Activated naive CD4-positive, alpha-beta T cell treated with anti-CD3 and anti-CD28 coated beads for 36 hours (primary cell): ENCODE measurements at regions of chr11 and their contacts with region 1.

Region 1: GRCh38 chr11:59158206-59159068 is 13.5 kb upstream of the DTX4 start:
- DNase-seq: peak; percentile 80
- H3K4me3 Mint-ChIP-seq: no peak overlapping the region
- H3K27ac Mint-ChIP-seq: no peak overlapping the region
- H3K4me1 Mint-ChIP-seq: peaks cover 8% of the 10 kb centered on the region
- H3K27me3 Mint-ChIP-seq: peaks cover 11% of the 10 kb centered on the region

Region 2: GRCh38 chr11:58654079-58654907 is 504.1 kb before region 1 on chr11:
- CTCF ChIA-PET with region 1: interaction called, 3 read pairs
- intact Hi-C with region 1: loop called (anchors 5 kb)
- DNase-seq: peak; percentile 89
- H3K4me3 Mint-ChIP-seq: no peak overlapping the region
- H3K27ac Mint-ChIP-seq: no peak overlapping the region
- H3K4me1 Mint-ChIP-seq: peaks cover 18% of the 10 kb centered on the region
- H3K27me3 Mint-ChIP-seq: no peaks in the 10 kb centered on the region

Region 3: GRCh38 chr11:58958500-58958899 is 199.9 kb before region 1 on chr11:
- CTCF ChIA-PET with region 1: interaction called, 9 read pairs
- intact Hi-C with region 1: loop called (anchors 5 kb)
- DNase-seq: peak; percentile 62
- H3K4me3 Mint-ChIP-seq: no peak overlapping the region
- H3K27ac Mint-ChIP-seq: no peak overlapping the region
- H3K4me1 Mint-ChIP-seq: peaks cover 8% of the 10 kb centered on the region
- H3K27me3 Mint-ChIP-seq: peaks cover 6% of the 10 kb centered on the region

Region 4: DNA sequence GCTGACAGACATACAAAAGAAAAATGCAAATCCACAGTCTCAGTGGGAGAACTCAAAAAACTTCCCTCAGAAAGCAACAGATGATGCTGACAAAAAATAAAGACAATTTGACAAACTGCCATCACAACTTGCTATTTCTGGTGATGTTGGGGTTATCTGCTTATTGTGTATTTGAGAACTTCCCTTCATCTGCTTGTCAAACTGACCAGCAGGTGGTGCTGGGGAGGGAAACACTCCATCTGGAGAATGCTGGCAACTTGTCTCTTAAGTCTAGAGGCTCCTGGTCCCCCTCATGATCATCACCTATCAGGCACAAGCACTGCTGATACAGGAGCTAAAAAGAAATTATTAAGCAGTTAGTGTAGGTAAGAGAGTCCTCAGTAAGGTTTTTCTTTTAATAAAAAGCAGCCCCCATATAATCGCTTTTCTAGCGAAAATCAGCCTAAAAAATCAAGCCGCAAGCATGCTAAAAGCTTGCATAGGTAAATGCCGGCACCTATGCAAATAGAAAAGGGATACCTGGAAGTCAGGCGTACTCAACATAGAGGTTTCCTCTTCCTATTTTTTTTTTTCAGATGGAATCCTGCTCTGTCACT is 61.2 kb before region 1 on chr11:
- CTCF ChIA-PET with region 1: interaction called, 57 read pairs
- intact Hi-C with region 1: loop called (anchors 1 kb)
- DNase-seq: peak; percentile 79
- H3K4me3 Mint-ChIP-seq: no peak overlapping the region
- H3K27ac Mint-ChIP-seq: no peak overlapping the region
- H3K4me1 Mint-ChIP-seq: peaks cover 5% of the 10 kb centered on the region
- H3K27me3 Mint-ChIP-seq: peaks cover 21% of the 10 kb centered on the region

Region 5: GRCh38 chr11:59135648-59136461 is 22.6 kb before region 1 on chr11:
- CTCF ChIA-PET with region 1: interaction called, 46 read pairs
- intact Hi-C with region 1: loop called (anchors 1 kb)
- DNase-seq: peak; percentile 93
- H3K4me3 Mint-ChIP-seq: peak overlapping the region; percentile 26
- H3K27ac Mint-ChIP-seq: no peak overlapping the region
- H3K4me1 Mint-ChIP-seq: peaks cover 6% of the 10 kb centered on the region
- H3K27me3 Mint-ChIP-seq: no peaks in the 10 kb centered on the region

Region 6: GRCh38 chr11:59171508-59172322 is 13.3 kb after region 1 on chr11 and contains the start of gene DTX4:
- CTCF ChIA-PET with region 1: interaction called, 18 read pairs
- intact Hi-C with region 1: no loop called
- DNase-seq: peak; percentile 94
- H3K4me3 Mint-ChIP-seq: peak within 1 kb of the TSS; percentile 68
- H3K27ac Mint-ChIP-seq: no peak within 1 kb of the TSS
- H3K4me1 Mint-ChIP-seq: peaks cover 13% of the 10 kb centered on the region
- H3K27me3 Mint-ChIP-seq: peaks cover 15% of the 10 kb centered on the region
- total RNA-seq, gene DTX4: 0.07 to 0.14 TPM

Region 7: DNA sequence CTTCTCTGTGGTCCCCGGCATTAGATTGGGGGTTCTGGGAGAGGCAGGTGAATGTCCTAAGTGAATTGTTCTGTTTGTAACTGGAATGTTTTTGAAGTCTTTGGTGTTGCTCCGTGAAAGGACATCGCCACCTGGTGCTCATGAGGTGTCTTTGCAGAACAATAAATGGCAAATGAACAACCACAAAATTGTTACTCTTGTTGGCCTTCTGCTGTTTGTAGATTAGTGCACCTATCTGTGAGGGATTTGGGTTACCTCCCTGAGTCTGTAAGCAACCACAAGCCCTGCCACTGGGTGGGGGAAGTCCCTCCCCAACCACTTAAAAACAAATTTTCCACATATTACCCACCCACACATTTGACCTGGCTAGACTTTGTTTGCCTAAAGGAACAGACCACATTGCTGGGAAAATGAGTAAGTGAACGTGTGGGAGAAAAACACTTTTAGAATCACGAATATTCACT is 49.6 kb after region 1 on chr11:
- CTCF ChIA-PET with region 1: interaction called, 12 read pairs
- intact Hi-C with region 1: no loop called
- DNase-seq: peak; percentile 53
- H3K4me3 Mint-ChIP-seq: no peak overlapping the region
- H3K27ac Mint-ChIP-seq: no peak overlapping the region
- H3K4me1 Mint-ChIP-seq: peaks cover 35% of the 10 kb centered on the region
- H3K27me3 Mint-ChIP-seq: peaks cover 26% of the 10 kb centered on the region

Region 8: DNA sequence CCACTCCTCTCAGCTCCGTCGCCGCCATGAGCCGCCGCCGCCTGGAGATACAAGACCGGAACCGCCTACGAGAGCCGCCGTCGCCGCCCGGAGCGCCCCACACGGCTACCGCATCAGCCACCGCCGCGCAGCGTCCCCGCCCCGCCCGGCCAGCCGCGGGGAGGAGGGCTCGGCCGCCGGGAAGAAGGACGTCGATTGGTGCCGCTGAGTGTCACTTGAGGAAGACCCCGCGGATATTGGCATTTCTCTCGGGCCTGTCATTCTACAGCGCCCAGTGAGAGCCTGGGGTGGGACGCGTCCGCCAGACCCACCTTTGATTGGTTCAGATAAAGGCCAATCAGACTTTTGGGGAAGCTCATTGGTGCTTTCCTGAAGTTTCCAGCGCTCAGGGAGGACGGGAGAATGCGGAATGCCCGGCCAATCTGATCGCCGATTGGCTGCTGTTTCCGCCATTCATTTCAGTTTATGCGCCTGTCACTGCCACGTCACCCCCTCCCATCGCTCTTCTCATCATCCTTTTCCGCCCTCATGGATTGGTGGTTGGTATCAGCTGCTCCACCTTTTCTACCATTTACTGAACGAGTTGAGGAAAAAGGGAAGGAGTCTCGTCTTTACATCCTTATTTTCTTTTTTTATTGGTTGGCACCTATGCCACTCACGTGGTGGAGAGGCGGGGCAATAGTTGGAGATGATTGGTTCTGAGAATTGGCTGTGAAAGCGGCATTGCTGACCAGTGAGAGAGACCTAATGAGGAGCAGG is 457.4 kb after region 1 on chr11 and contains the start of gene OSBP:
- CTCF ChIA-PET with region 1: no interaction called
- intact Hi-C with region 1: no loop called
- DNase-seq: peak; percentile 99
- H3K4me3 Mint-ChIP-seq: peak within 1 kb of the TSS; percentile 81
- H3K27ac Mint-ChIP-seq: peak within 1 kb of the TSS; percentile 86
- H3K4me1 Mint-ChIP-seq: peaks cover 35% of the 10 kb centered on the region
- H3K27me3 Mint-ChIP-seq: no peaks in the 10 kb centered on the region
- total RNA-seq, gene OSBP: 33.9 to 37.0 TPM